HepG2 (cell line): ENCODE measurements at regions of chr6 and their contacts with region 1.

Region 1: GRCh38 chr6:138428944-138429598 is 25.0 kb downstream of the HEBP2 start:
- DNase-seq: peak; percentile 62
- ATAC-seq: peak; percentile 26
- H3K4me3 ChIP-seq: no peak overlapping the region
- H3K27ac ChIP-seq: no peak overlapping the region
- H3K4me1 ChIP-seq: no peaks in the 10 kb centered on the region
- H3K27me3 ChIP-seq: no peaks in the 10 kb centered on the region
- CTCF ChIP-seq: peak; percentile 67
- EP300 ChIP-seq: no peak
- POLR2A ChIP-seq: no peak
- RAD21 ChIP-seq: peak; percentile 54; the same call in 1 of the 2 replicates

Region 2: GRCh38 chr6:137581019-137581707 is 847.9 kb before region 1 on chr6:
- CTCF ChIA-PET with region 1: no interaction called
- POLR2A ChIA-PET with region 1: no interaction called
- in situ Hi-C with region 1: no loop called
- intact Hi-C with region 1: no loop called
- DNase-seq: no peak
- ATAC-seq: no peak
- H3K4me3 ChIP-seq: no peak overlapping the region
- H3K27ac ChIP-seq: no peak overlapping the region
- H3K4me1 ChIP-seq: no peaks in the 10 kb centered on the region
- H3K27me3 ChIP-seq: no peaks in the 10 kb centered on the region
- CTCF ChIP-seq: no peak
- EP300 ChIP-seq: no peak
- POLR2A ChIP-seq: no peak
- RAD21 ChIP-seq: no peak

Region 3: GRCh38 chr6:138509371-138509770 is 80.3 kb after region 1 on chr6:
- CTCF ChIA-PET with region 1: interaction called, 17 read pairs
- POLR2A ChIA-PET with region 1: no interaction called
- in situ Hi-C with region 1: loop called (anchors 5 kb)
- intact Hi-C with region 1: loop called (anchors 1 kb)
- DNase-seq: peak; percentile 71
- ATAC-seq: peak; percentile 31; the same call in 2 of the 3 replicates
- H3K4me3 ChIP-seq: no peak overlapping the region
- H3K27ac ChIP-seq: no peak overlapping the region
- H3K4me1 ChIP-seq: peaks cover 54% of the 10 kb centered on the region
- H3K27me3 ChIP-seq: no peaks in the 10 kb centered on the region
- CTCF ChIP-seq: peak; percentile 90
- EP300 ChIP-seq: no peak
- POLR2A ChIP-seq: no peak
- RAD21 ChIP-seq: peak; percentile 63; the same call in 1 of the 2 replicates

Region 4: DNA sequence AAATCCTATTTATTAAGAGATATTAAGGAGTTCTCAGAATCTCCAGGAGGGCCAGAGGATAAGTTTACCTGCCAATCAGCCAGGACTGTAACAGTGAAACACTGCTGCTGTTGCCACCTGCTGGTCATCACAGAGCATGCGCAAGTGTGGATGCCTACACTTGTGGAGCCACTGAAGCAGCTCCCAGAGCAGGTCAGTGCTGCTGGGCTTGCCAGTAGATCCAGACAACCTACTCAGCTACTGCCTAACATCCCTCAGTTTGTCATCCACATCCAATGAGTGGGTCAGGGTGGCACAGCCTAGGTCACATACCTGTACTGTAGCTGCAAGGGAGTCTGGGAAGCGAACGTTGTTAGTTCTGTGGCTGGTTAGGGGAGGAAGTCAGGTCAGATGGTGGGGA is 88.6 kb after region 1 on chr6:
- CTCF ChIA-PET with region 1: interaction called, 31 read pairs
- POLR2A ChIA-PET with region 1: interaction called, 3 read pairs
- in situ Hi-C with region 1: no loop called
- intact Hi-C with region 1: no loop called
- DNase-seq: peak; percentile 78
- ATAC-seq: peak; percentile 96
- H3K4me3 ChIP-seq: no peak overlapping the region
- H3K27ac ChIP-seq: no peak overlapping the region
- H3K4me1 ChIP-seq: peaks cover 32% of the 10 kb centered on the region
- H3K27me3 ChIP-seq: no peaks in the 10 kb centered on the region
- CTCF ChIP-seq: peak; percentile 88
- EP300 ChIP-seq: no peak
- POLR2A ChIP-seq: no peak
- RAD21 ChIP-seq: peak; percentile 83

Region 5: DNA sequence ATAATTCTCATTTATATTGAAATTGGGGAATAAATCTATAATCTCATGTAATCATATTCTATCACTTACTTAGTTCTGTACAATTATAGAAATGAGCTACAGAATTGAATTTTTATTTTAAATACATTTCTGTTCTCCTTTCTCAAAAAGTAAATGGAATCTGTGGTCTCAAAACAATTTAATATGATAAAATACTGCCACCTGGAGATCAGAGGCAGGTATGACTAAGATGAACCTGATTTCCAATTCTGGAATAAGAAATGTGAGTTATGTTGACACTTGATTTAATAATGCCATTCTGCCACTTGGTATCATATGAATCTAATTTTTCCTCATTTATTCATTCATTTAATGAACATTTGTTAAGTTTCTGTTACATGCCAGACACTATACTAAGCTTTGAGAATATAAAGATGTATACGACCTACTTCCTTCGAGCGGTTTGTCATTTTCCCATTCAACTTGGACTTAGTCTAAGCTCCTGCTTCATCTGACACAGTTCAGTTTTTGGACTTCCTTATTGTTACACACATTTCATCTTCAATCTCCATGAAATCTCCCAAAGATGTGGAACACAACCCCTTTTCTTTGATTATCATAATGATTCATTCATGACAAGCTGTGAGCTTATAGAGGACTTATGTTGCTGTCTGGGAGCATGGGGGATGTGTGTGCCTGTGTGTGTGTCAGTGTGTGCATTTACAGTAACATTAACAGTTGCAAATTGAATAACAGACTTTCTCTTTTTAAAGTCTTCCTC is 337.0 kb after region 1 on chr6:
- CTCF ChIA-PET with region 1: interaction called, 3 read pairs
- POLR2A ChIA-PET with region 1: no interaction called
- in situ Hi-C with region 1: loop called (anchors 10 kb)
- intact Hi-C with region 1: loop called (anchors 5 kb)
- DNase-seq: peak; percentile 48
- ATAC-seq: no peak
- H3K4me3 ChIP-seq: no peak overlapping the region
- H3K27ac ChIP-seq: no peak overlapping the region
- H3K4me1 ChIP-seq: peaks cover 3% of the 10 kb centered on the region
- H3K27me3 ChIP-seq: no peaks in the 10 kb centered on the region
- CTCF ChIP-seq: peak; percentile 73
- EP300 ChIP-seq: no peak
- POLR2A ChIP-seq: no peak
- RAD21 ChIP-seq: peak; percentile 66; the same call in 1 of the 2 replicates